BJ (cell line): ENCODE measurements at regions of chr14 and their contacts with region 1.

Region 1: DNA sequence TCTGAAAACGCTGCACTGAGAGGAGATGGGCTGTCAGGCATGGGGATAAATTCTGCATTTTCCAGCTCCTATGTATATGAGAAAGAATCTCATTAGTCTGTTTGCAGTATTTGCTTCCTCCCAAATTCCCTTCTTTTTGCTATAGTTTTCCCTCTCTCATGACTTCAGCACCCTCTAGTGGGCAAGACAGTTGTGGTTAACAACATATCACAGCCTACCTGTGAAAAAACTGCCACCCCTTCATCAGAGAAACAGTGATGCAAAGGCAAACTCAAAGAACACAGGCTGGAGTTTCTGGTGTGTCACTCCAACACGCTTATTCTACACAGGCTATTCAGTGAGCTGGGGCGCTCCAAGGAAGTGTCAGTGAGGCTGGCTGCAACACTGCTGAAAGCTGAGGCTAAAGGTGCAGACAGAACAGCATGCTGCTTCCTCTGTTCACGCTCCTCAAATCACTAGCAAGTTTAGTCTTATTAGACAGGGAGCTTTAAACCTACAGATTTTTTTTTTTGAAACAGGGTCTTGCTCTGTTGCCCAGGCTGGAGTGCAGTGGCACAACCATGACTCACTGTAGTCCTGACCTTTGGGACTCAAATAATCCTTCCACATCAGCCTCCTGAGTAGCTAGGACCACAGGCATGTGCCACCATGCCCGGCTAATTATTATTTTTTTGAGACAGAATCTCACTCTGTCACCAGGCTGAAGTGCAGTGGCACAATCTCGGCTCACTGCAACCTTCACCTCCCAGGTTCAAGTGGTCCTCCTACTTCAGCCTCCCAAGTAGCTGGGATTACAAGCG is 19.3 kb downstream of the ZC2HC1C start:
- DNase-seq: no peak
- H3K4me3 ChIP-seq: no peak overlapping the region
- H3K27me3 ChIP-seq: no peaks in the 10 kb centered on the region
- CTCF ChIP-seq: peak; percentile 76

Region 2: DNA sequence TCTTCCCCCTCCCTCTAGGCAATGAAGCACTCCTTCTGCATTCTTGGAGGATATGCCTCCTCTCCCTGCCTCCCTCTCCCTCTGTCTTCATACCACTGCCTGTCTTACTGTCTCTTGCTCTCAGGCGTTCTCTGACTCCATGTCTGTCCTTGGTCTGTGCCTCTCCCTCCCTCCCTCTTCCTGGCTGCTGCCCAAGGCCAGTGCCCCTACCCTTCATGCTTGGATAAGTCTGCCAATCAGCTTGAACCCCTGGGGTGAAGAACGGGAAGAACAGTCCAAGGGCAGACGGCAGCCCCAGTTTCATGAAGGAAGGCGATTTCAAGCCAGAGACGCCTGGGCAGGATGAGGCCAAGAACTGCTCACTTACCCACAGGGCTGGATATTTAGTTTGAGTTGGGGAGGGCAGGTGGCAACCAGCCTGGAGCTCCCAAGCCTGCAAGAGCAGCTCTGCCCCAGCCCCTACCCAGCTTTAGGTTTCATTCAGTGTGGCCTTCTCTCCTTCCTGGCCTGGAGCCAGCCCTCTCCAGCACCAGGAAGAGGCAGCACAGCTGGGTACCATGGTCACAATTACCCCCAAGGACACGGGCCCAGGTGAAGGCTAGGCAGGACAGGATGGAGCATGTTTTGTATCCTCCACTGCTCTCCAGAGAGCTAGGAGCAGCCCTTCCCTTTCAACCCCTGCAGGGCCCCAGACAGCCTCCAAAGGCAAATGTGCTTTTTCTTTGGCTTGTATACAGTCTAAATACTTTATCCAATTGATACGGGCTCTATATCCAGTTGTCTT is 440.9 kb before region 1 on chr14:
- CTCF ChIA-PET with region 1: no interaction called
- POLR2A ChIA-PET with region 1: no interaction called
- DNase-seq: no peak
- H3K4me3 ChIP-seq: no peak overlapping the region
- H3K27me3 ChIP-seq: no peaks in the 10 kb centered on the region
- CTCF ChIP-seq: no peak

Region 3: DNA sequence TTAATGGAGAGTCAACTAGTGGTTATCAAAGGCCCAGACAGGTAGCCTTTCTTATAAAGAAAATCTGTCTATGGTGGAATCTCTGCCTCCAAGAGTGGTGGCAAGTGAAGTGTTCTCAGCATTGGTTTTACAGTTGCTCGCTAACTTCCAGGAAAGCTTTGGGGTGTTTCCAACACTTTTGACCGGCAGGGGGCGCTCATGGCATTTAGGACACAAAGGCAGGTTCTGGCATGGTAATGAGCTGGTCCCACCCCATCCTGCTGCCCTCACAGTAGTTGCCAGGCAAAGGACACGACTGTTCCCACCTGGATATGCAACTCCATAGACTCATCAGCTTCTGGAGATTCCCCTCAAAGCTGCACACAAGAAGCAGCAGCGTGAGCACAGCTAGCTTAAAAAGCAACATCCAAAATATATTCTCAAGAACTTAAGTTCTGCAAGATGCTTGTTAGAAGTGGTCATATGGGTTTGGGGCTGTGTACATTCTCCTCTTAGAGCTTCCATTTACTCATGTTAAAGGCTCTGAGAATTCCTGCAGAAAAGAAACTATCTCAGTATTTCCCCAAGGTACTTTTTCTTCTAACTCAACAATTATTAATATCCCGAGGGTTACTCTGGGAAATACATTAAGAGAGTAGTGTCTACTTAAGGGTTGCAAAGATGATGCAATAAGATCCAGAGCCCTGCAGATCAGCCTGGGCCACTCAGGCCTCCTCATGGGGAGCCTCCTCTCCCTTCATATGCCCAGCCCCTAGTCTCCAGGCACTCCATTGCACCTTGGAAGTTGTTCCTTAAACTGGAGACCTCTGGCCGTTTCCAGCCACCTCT is 227.7 kb before region 1 on chr14:
- CTCF ChIA-PET with region 1: interaction called, 67 read pairs
- POLR2A ChIA-PET with region 1: no interaction called
- DNase-seq: no peak
- H3K4me3 ChIP-seq: no peak overlapping the region
- H3K27me3 ChIP-seq: no peaks in the 10 kb centered on the region
- CTCF ChIP-seq: peak; percentile 85

Region 4: DNA sequence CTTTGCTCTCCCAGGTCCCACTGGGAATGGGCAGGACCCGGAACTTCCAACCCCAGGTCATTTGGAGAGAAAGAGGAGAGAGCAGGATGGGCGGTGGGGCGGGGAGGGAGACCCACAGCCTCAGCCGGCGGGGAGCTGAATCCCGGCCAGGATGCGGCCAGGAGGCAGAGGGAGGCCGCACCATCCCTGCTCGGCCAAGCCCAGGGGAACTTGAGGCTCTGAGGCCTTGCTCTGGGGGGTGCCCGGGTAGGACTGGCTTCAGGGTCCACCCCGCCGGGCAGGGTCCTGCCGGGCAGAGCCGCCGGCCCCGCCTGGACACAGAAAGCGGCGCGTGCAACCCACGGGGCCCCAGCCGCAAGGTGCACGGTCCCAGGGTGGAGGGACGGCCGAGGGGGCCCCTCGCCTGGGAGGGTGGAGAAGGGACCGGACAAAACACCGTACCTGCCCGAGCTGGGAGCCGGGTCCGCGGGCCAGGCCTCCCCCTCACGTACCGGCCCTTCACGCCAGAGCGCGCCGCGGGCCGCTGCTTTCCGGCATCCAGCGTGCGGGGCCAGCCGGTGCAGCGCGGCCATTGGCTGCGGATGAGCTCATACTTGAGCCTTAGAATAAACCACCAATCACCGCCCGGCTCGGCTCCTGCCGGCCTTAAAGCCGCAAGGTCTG is 165.9 kb before region 1 on chr14 and contains the start of gene RPS6KL1:
- CTCF ChIA-PET with region 1: interaction called, 44 read pairs
- POLR2A ChIA-PET with region 1: no interaction called
- DNase-seq: no peak
- H3K4me3 ChIP-seq: peak within 1 kb of the TSS; percentile 48
- H3K27me3 ChIP-seq: peaks cover 2% of the 10 kb centered on the region
- CTCF ChIP-seq: no peak
- polyA plus RNA-seq, gene RPS6KL1: 1.4 and 2.8 TPM in 2 replicates

Region 5: DNA sequence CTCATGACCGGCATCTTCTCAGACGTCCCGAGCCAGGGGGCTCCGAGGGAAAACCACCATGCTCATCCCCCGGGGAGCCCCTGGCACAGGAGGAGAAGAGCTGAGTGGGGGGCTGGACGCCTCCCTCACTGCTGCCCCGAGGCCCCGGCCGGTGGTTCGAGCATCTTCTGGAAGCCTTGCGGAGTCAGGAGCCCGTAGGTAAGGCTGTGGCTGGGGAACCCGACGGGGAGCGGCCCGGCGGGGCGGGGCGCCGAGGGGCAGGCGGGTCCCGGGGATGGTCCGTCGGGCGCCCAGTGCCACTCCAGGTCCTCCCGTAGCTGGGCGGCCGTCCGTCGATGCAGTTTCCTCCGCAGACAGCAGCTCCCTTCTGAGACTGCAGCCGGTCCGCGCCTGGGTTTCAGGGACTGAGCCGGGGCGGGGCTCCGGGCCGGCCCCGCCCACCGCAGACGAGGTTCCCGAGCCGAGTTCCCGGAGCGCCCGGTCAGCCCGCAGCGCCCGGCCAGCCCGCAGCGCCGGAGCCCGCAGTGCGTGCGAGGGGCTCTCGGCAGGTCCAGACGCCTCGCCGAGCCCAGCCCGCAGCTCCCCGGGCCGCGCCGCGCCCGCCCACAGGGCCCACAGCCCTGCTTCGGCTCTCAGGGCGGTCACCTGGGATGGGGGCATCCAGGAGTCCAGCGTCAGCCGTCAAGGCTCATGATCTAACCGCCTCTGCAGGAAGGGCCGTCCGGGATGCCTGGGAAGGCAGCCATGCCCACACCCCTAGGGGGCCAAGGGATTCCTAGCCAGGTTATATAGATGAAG is 133.3 kb before region 1 on chr14 and contains the start of gene PGF:
- CTCF ChIA-PET with region 1: interaction called, 29 read pairs
- POLR2A ChIA-PET with region 1: no interaction called
- DNase-seq: no peak
- H3K4me3 ChIP-seq: peak within 1 kb of the TSS; percentile 45
- H3K27me3 ChIP-seq: no peaks in the 10 kb centered on the region; the same call in 1 of the 2 replicates
- CTCF ChIP-seq: no peak
- polyA plus RNA-seq, gene PGF: 3.3 and 4.1 TPM in 2 replicates

Region 6: DNA sequence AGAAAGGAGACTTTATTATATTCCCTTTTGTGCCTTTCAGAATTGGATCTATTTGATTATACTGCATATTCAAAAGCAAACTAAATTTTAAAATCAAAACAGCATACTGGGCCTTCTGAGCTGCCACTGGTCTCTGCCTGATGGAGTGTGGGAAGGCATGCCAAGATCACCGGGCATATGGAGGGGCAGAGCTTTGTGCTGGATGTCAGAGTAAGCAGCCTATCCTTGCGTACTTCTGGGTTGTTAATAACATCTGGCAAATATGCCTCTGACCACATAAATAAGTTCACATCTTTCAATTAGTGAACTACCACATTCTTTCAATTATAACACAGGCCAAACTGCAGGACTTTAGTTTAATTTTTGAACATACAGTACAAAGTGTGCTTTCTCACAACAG is 55.8 kb before region 1 on chr14:
- CTCF ChIA-PET with region 1: no interaction called
- POLR2A ChIA-PET with region 1: no interaction called
- DNase-seq: no peak
- H3K4me3 ChIP-seq: no peak overlapping the region
- H3K27me3 ChIP-seq: no peaks in the 10 kb centered on the region
- CTCF ChIP-seq: no peak

Region 7: GRCh38 chr14:75077794-75078193 is 11.0 kb before region 1 on chr14:
- CTCF ChIA-PET with region 1: interaction called, 25 read pairs
- POLR2A ChIA-PET with region 1: no interaction called
- DNase-seq: no peak
- H3K4me3 ChIP-seq: no peak overlapping the region
- H3K27me3 ChIP-seq: no peaks in the 10 kb centered on the region
- CTCF ChIP-seq: no peak

Region 8: GRCh38 chr14:75126679-75127473 is 38.1 kb after region 1 on chr14 and contains the start of gene NEK9:
- CTCF ChIA-PET with region 1: interaction called, 16 read pairs
- POLR2A ChIA-PET with region 1: no interaction called
- DNase-seq: no peak
- H3K4me3 ChIP-seq: peak within 1 kb of the TSS; percentile 72
- H3K27me3 ChIP-seq: no peaks in the 10 kb centered on the region
- CTCF ChIP-seq: no peak
- polyA plus RNA-seq, gene NEK9: 38.1 and 53.4 TPM in 2 replicates

Region 9: DNA sequence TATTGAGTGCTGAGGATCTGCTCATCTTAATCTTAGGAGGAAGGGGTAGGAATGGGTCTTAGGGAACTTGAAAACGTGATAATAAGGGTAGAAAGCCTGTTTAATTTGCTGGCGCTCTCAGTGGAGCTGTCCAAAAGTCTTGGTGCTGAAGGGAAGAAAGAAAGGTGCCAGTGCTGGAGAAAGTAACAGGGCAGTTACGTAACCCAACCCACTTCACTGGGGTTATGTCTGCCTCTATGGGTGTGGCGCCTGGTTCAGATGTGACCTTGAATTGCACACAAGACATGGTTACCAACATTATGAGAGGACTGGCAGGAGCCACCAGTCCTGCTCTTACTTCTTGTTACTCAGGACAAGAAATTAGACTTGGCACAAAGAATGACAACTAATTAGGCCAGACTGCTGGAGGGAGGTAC is 1044.3 kb after region 1 on chr14:
- CTCF ChIA-PET with region 1: no interaction called
- POLR2A ChIA-PET with region 1: no interaction called
- DNase-seq: no peak
- H3K4me3 ChIP-seq: no peak overlapping the region
- H3K27me3 ChIP-seq: peaks cover 16% of the 10 kb centered on the region
- CTCF ChIP-seq: no peak